ENCODE measurements at regions of chr1 and their contacts with region 1.

Region 1: GRCh38 chr1:177948336-177948972 is 21.4 kb downstream of the SEC16B start:
- DNase-seq: no peak
- H3K4me3 ChIP-seq: no peak overlapping the region
- CTCF ChIP-seq: peak; percentile 80

Region 2: DNA sequence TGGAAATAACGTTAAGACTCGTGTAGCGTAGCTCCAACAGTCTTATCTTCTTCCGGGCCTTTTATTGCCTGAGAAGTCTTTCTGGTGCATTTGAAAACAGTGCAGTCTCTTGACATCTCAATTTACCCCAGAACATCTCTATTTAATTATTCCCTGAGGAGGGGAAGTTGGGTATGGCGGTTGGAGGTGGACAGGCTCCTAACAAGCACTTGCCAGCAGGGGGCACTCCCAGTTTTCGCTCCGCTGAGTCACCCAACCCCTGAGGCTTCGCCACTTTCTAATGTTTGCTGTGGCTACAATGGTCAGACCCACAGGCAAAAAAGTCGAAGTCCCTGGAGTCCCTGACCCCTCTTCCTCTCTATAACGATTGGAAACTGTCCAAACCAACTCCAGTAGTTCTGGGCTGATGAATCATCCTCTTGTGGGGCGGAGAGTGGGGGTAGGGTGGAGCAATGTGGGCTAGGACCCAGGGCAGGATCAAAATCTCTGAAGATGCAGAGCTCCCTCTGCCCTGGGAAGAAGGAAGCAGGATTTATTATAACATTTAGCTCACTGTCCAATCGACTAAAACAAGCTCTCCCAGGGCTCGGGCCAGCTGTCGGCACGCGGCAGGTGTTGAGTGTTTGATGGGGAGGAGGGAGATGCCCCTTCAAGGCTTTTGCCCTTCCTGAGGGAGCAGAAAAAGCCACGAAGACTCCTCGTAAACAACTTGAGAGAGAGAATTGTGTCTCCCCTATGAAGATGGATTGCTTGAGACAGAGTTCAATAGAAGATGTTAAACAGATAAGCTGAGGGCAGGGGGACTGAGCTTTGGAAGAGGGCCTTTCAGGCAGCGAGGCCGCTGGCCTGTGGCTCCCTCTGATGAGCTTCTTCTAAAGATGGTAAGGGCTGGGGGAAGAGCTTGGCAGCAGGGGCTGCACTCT is 692.0 kb before region 1 on chr1:
- CTCF ChIA-PET with region 1: interaction called, 17 read pairs
- POLR2A ChIA-PET with region 1: no interaction called
- DNase-seq: no peak
- H3K4me3 ChIP-seq: no peak overlapping the region
- CTCF ChIP-seq: peak; percentile 41

Region 3: DNA sequence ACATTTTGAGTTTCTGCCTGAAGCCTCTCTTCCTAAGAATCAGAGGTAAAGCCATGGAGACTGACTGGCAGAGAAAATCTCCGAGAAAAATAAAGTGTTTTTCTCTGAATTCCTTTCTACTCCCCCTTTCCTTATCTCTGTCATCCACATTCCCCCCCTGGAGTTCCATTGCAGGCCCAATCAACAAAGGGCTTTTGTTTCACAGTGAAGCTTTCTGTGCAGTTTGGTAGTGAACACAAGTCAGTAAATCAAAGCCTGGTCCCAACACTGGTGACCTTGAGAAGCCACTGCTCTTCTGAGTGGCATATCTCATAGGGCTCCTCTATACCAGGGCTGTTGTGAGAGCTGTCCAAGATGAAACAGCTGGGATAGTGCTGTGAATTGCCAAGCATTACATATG is 207.0 kb before region 1 on chr1:
- CTCF ChIA-PET with region 1: no interaction called
- POLR2A ChIA-PET with region 1: no interaction called
- DNase-seq: no peak
- H3K4me3 ChIP-seq: no peak overlapping the region
- CTCF ChIP-seq: no peak

Region 4: DNA sequence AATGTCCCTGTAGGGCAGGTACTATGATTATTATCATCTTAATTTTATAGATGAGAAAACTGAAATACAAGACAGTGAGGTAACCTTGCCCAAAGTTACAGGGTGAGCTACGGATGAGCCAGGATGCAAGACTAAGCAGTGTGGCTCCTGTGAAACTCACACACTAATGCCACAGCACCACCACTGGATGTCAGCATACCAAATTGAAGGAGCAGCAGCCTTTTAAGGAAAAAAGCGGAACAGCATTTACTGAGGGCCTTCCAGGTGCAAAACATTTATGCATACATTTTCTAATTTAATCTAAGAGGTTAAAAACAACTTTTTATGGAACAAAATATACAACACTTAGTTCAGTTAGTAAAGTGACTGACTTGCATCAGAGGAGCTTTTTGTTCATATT is 20.3 kb before region 1 on chr1:
- CTCF ChIA-PET with region 1: interaction called, 95 read pairs
- POLR2A ChIA-PET with region 1: no interaction called
- DNase-seq: no peak
- H3K4me3 ChIP-seq: no peak overlapping the region
- CTCF ChIP-seq: peak; percentile 26

Region 5: DNA sequence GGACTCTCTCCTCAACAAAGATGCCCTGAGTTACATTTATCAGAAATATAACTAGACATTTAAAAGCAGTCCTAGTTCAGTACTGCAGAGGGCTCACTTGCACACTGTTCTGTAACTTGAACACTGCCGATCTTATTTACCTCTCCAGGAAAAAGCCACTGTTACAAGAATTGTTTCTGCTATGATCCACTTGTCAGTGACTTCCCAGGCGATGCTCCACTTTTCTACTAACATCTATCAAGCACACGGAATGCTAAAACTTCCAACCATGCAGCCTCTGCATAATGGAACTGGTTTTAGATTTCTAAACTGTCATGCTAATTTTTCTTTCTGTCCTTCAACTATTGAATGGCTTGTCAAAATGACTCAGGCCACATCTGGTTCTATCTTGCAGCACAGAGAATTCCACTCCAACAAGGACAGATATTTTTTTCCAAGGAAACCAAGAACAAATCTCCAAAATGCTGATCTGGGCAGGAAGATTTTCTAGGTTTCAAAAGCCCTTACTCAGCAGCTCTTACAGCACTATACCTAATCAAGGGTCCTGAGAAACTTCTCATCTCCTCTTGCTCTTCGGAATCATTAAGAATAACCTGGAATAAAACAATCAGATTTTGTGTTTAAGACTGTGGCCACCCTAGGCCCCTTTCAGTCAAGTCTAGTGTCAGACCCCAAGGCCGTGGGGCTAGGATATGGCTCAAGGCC is 11.5 kb after region 1 on chr1:
- CTCF ChIA-PET with region 1: interaction called, 15 read pairs
- POLR2A ChIA-PET with region 1: no interaction called
- DNase-seq: no peak
- H3K4me3 ChIP-seq: no peak overlapping the region
- CTCF ChIP-seq: peak; percentile 43

Region 6: DNA sequence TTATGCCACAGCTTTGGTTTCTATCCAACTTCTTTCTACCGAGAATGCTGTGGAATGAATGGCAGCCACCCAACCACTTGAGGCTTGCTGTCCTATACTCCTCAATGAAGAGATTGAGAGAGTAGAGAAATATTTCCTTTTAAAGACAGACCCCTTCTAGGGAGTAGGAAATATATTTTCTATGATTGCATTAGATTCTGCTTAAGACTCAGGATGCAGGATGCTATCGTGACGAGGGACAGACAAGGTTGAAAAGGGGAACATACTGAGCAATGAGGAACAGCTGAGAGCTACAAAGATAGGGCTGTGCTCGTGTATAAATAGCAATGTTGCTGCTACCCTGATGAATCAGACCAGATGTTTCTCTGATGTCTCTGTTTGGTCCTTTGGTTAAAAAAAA is 138.3 kb after region 1 on chr1:
- CTCF ChIA-PET with region 1: no interaction called
- POLR2A ChIA-PET with region 1: no interaction called
- DNase-seq: no peak
- H3K4me3 ChIP-seq: no peak overlapping the region
- CTCF ChIP-seq: no peak

Region 7: DNA sequence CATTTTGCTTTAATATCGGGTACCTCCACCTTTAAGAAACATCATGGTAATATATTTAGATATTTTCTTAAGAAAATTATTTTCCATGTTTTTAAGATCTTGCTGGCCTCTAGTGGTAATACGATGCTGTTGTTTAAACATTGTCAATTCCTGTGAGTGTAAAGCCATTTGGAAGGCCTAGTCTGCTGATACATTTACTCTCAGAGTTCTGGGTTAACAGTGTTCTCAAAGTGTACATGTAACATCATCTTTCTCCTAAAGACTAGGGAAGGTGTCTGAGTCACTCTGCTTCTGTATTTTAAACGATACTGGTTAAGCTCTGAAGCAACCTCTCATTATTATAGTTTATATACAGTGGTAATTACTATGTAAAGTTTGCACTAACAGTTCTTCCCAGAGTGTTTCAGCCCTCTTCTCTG is 334.5 kb after region 1 on chr1:
- CTCF ChIA-PET with region 1: interaction called, 16 read pairs
- POLR2A ChIA-PET with region 1: no interaction called
- DNase-seq: peak; percentile 24
- H3K4me3 ChIP-seq: no peak overlapping the region
- CTCF ChIP-seq: peak; percentile 35

Measured in AG04449 (cell line).